ENCODE measurements at regions of chr6 and their contacts with region 1.

Region 1: DNA sequence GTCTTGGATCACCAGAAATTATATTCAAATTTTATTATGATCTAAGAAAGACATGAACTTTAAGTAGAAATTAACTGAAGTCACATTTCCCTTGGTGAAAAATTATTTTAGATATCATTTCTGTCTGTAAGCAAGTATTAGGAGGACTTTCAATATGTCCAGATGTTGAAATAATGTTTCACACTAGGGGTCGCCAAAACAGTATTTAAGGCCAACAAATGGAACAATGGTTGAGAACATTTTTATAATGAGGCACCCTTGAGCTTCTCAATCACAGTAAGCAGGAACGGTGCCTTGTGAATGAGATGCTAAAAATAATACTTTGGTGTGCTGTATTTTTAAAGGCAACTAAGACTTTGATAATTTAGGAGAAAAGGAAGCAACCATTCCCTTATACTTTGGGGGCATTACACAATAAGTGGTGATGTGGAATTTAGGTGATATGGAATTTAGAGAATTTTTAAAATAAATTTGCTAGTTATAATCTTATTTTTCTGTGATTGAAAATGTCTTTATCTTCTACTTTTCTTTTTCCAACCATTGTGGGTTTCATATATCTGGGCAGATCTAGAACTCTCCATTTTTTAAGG is 9.6 kb upstream of the SF3B5 start:
- DNase-seq: peak in 2 of 4 donors; percentile 67 to 82
- ATAC-seq: peak; percentile 77
- H3K4me3 ChIP-seq: no peak overlapping the region
- H3K27ac ChIP-seq: no peak overlapping the region
- H3K4me1 ChIP-seq: no peaks in the 10 kb centered on the region
- H3K27me3 ChIP-seq: no peaks in the 10 kb centered on the region
- CTCF ChIP-seq: peak; percentile 52 to 69

Region 2: DNA sequence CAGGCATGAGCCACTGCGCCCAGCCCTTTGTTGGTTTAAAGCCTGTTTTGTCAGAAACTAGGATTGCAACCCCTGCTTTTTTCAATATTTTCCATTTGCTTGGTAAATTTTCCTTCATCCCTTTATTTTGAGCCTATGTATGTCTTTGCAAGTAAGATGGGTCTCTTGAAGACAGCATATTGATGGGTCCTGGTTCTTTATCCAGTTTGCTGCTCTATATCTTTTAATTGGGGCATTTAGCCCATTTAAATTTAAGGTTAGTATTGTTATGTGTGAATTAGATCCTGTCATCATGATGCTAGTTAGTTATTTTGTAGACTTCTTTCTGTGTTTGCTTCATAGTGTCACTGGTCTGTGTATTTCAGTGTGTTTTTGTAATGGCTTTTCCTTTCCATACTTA is 194.0 kb before region 1 on chr6:
- intact Hi-C with region 1: no loop called
- DNase-seq: no peak
- ATAC-seq: no peak
- H3K4me3 ChIP-seq: no peak overlapping the region
- H3K27ac ChIP-seq: no peak overlapping the region
- H3K4me1 ChIP-seq: no peaks in the 10 kb centered on the region
- H3K27me3 ChIP-seq: no peaks in the 10 kb centered on the region
- CTCF ChIP-seq: no peak

Region 3: DNA sequence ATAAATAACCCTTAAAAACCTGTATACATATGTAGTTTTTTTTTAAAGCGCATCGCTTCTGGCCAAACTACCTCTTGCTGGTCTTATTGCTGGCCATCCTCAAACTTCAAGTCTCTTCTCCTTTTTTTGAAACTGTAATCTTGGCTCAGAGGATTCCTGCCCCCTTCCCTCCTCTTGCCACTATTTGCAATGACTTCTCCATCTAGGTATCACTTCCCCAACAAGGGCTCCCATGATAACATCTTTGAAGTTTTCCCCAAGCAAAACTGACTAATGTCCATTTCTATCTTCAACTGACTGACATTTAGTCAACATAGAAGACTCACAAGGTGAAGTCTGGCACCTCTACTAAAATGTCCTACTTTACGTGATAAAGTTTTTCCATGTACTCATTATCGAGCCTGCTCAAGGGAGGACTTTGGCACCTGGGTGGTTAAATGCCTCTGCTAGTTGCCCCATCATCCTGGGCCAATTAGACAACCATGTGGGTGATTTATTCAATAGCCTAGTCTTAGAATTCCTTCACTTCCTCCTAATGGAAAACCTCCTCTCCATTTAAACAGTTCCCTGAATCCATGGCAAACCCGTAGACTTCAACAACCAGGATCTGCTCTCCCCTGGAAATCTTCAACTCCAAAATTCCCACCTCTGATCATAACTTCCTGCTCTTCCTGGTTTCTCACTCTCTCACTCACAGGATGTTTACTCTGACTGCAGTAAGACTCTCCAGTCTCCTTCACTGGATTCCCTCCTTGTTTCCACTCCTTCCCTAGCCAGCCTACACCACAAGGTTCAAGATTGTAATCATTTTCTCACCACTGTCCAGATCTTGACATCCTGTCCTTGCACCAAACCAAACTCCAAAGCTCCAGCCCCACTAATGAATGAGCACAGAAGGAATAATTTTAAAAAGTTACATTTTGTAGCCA is 87.6 kb before region 1 on chr6:
- intact Hi-C with region 1: no loop called
- DNase-seq: no peak
- ATAC-seq: peak; percentile 79
- H3K4me3 ChIP-seq: no peak overlapping the region
- H3K27ac ChIP-seq: no peak overlapping the region
- H3K4me1 ChIP-seq: no peaks in the 10 kb centered on the region
- H3K27me3 ChIP-seq: no peaks in the 10 kb centered on the region
- CTCF ChIP-seq: no peak

Region 4: GRCh38 chr6:144215932-144216667 is 111.1 kb after region 1 on chr6:
- intact Hi-C with region 1: loop called in 1 of 2 experiments (anchors 5 kb)
- DNase-seq: peak; percentile 92 to 99 (median 98)
- ATAC-seq: peak; percentile 88
- H3K4me3 ChIP-seq: peak overlapping the region; percentile 47 to 60
- H3K27ac ChIP-seq: peak overlapping the region; percentile 95 to 99
- H3K4me1 ChIP-seq: peaks cover 11 to 29% of the 10 kb centered on the region in 2 donors
- H3K27me3 ChIP-seq: no peaks in the 10 kb centered on the region
- CTCF ChIP-seq: peak in 1 of 2 donors; percentile 79